ENCODE measurements at regions of chr3 and their contacts with region 1.

Region 1: GRCh38 chr3:129278439-129278970 is at the start of gene HMCES:
- DNase-seq: peak; percentile 94
- H3K4me3 Mint-ChIP-seq: peak within 1 kb of the TSS; percentile 97
- H3K27ac Mint-ChIP-seq: peak within 1 kb of the TSS; percentile 91
- H3K4me1 Mint-ChIP-seq: peaks cover 51% of the 10 kb centered on the region
- H3K27me3 Mint-ChIP-seq: no peaks in the 10 kb centered on the region
- total RNA-seq, gene HMCES: 45.7 to 50.1 TPM

Region 2: GRCh38 chr3:128863560-128863959 is 414.9 kb before region 1 on chr3:
- CTCF ChIA-PET with region 1: no interaction called
- POLR2A ChIA-PET with region 1: no interaction called
- DNase-seq: peak; percentile 24
- H3K4me3 Mint-ChIP-seq: no peak overlapping the region
- H3K27ac Mint-ChIP-seq: no peak overlapping the region
- H3K4me1 Mint-ChIP-seq: peaks cover 2% of the 10 kb centered on the region
- H3K27me3 Mint-ChIP-seq: no peaks in the 10 kb centered on the region

Region 3: DNA sequence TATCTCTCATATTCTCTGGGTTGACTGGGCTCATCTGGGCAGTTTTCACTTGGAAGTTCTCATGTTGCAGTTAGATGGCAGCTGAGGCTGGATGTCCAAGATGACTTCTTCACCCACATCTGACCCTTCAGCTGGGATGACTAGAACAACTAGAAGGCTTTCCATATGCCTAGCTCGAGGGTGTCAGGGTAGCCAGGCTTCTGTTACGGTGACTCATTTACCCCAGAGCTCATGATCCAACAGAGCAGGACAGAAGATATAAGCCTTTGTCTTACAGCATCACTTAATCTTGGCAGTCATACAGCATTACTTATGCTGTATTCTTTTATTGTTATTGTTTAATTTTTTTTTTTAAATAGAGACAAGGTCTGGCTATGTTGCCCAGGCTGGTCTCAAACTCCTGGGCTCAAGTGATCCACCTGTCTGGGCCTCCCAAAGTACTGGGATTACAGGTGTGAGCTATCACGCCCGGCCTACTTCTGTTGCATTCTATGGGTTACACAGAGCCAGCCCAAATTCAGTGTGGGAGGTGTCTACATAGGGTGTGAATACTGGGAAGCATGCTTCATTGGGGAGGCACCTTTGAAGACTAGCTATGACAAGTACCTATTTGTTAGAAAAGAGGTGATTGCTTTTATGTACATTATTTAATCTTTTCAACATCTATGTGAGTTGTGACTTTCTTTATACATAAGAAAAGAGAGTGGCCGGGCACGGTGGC is 10.9 kb after region 1 on chr3:
- CTCF ChIA-PET with region 1: interaction called, 13 read pairs
- POLR2A ChIA-PET with region 1: interaction called, 4 read pairs
- DNase-seq: no peak
- H3K4me3 Mint-ChIP-seq: no peak overlapping the region
- H3K27ac Mint-ChIP-seq: no peak overlapping the region
- H3K4me1 Mint-ChIP-seq: no peaks in the 10 kb centered on the region
- H3K27me3 Mint-ChIP-seq: no peaks in the 10 kb centered on the region

Measured in activated CD4-positive, alpha-beta memory T cell treated with anti-CD3 and anti-CD28 coated beads, Interleukin-2, amount 10 ng/mL, durations not matched to agents 7 days and 5 days (primary cell).